ENCODE measurements at regions of chr20 and their contacts with region 1.

Region 1: GRCh38 chr20:47379433-47380150 is 23.1 kb upstream of the ZMYND8 start:
- DNase-seq: no peak
- H3K4me3 Mint-ChIP-seq: no peak overlapping the region
- H3K27ac Mint-ChIP-seq: no peak overlapping the region
- H3K4me1 Mint-ChIP-seq: peaks cover 27% of the 10 kb centered on the region
- H3K27me3 Mint-ChIP-seq: peaks cover 2% of the 10 kb centered on the region

Region 2: GRCh38 chr20:47196091-47197081 is 183.2 kb before region 1 on chr20:
- CTCF ChIA-PET with region 1: interaction called, 28 read pairs
- POLR2A ChIA-PET with region 1: no interaction called
- DNase-seq: peak; percentile 83
- H3K4me3 Mint-ChIP-seq: no peak overlapping the region
- H3K27ac Mint-ChIP-seq: peak overlapping the region; percentile 50
- H3K4me1 Mint-ChIP-seq: peaks cover 13% of the 10 kb centered on the region
- H3K27me3 Mint-ChIP-seq: peaks cover 3% of the 10 kb centered on the region

Region 3: DNA sequence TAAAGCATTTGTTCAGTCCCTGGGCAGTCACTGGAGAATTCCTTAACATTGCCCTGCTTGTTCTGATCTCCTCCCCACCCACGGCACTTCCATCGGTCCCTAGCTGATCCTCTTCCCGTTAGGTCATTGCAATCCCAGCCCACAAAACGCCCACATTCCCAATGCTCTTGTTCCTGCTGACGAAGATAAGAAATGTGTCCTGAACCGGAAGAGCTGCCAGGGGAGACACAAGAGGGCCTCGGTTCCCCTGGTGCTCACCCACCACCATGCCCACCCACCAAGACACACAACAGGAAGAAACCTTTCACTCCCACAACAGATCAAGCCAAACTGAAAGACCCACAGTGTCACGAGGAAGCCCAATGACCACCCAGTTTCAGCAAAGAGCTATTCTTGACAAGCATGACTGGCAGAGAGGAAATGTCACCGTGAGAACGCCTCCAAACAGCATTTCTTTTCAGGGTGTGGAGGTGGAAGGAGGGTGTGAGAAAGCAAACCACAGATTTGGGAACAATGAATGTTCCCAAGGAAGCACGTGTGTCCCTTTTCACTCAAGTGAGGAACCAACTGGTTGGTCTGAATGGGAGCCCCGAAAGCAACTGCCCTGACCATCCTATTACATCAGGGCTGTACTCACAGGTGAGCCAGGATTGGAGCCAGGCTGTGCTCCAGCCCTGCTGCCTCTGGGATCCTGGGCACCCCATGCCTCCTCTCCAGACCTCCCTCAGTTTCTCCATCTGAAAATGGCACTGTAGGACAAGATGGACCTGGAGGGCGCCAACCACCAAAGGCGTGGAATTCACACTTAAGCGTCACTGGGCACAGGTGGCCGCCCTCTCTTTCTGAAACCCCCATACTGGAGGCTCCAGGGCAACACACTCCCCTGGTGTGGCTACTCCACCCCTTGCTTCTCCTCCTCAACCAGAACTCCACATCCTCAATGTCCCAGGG is 120.6 kb before region 1 on chr20:
- CTCF ChIA-PET with region 1: interaction called, 10 read pairs
- POLR2A ChIA-PET with region 1: no interaction called
- DNase-seq: no peak
- H3K4me3 Mint-ChIP-seq: no peak overlapping the region
- H3K27ac Mint-ChIP-seq: peak overlapping the region; percentile 43
- H3K4me1 Mint-ChIP-seq: peaks cover 5% of the 10 kb centered on the region
- H3K27me3 Mint-ChIP-seq: no peaks in the 10 kb centered on the region

Region 4: GRCh38 chr20:47281376-47281775 is 98.2 kb before region 1 on chr20:
- CTCF ChIA-PET with region 1: interaction called, 187 read pairs
- POLR2A ChIA-PET with region 1: no interaction called
- DNase-seq: no peak
- H3K4me3 Mint-ChIP-seq: no peak overlapping the region
- H3K27ac Mint-ChIP-seq: no peak overlapping the region
- H3K4me1 Mint-ChIP-seq: peaks cover 3% of the 10 kb centered on the region
- H3K27me3 Mint-ChIP-seq: no peaks in the 10 kb centered on the region

Region 5: DNA sequence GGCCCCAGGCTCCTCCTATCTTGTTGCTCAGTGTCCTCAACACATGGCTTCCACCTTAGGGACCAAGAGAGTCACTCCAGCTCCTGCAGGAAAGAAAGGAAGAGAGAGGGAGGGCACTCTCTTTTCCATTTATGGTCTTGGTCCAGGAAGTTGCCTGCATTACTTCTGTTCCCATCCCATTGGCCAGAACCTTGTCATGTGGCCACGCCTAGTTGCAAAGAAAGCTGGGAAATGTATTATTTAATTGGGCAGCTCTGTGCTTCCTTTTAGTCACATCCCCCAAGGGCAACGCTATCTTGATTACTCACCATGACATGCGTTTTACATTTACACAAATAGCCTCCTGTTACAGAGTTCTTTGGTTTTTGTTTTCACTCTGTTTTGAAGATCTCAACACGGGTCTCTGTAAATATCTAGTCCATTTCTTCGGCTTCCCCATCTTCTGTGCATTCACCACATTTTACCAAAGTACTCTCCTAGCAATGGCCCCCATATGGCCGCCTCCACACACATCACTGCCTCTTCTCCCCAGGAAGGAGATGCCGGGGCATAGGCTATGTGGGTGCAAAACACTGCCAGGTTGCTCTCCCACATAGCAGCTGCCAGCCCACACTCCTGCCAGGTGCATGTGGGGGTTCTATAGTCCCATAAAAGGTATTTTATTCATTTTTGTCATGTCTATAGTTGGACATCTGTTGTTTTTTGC is 12.6 kb after region 1 on chr20:
- CTCF ChIA-PET with region 1: interaction called, 21 read pairs
- POLR2A ChIA-PET with region 1: no interaction called
- DNase-seq: no peak
- H3K4me3 Mint-ChIP-seq: no peak overlapping the region
- H3K27ac Mint-ChIP-seq: no peak overlapping the region
- H3K4me1 Mint-ChIP-seq: peaks cover 13% of the 10 kb centered on the region
- H3K27me3 Mint-ChIP-seq: no peaks in the 10 kb centered on the region

Region 6: DNA sequence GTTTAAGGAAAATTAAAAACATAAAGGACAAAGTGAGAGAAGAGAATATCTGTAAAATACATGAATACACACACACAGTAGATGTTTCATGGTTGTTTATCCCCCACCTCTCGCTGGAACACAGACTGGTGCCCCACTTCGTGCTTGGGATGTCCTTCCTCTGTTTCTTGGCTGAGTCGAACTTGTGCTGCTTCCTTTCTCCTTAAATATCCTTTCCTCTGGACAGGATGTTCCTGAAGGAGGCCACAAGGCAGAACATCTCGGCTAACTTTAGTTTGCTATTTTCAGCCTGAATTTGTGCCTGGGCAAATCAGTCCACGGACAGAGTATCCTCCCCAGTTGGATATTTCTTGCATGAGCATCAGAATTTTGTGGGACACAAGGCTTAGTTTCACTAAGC is 31.6 kb after region 1 on chr20:
- CTCF ChIA-PET with region 1: interaction called, 13 read pairs
- POLR2A ChIA-PET with region 1: interaction called, 4 read pairs
- DNase-seq: no peak
- H3K4me3 Mint-ChIP-seq: no peak overlapping the region
- H3K27ac Mint-ChIP-seq: no peak overlapping the region
- H3K4me1 Mint-ChIP-seq: peaks cover 28% of the 10 kb centered on the region
- H3K27me3 Mint-ChIP-seq: no peaks in the 10 kb centered on the region